Activated CD4-positive, alpha-beta T cell treated with anti-CD3 and anti-CD28 coated beads for 36 hours (primary cell): ENCODE measurements at regions of chr17 and their contacts with region 1.

Region 1: DNA sequence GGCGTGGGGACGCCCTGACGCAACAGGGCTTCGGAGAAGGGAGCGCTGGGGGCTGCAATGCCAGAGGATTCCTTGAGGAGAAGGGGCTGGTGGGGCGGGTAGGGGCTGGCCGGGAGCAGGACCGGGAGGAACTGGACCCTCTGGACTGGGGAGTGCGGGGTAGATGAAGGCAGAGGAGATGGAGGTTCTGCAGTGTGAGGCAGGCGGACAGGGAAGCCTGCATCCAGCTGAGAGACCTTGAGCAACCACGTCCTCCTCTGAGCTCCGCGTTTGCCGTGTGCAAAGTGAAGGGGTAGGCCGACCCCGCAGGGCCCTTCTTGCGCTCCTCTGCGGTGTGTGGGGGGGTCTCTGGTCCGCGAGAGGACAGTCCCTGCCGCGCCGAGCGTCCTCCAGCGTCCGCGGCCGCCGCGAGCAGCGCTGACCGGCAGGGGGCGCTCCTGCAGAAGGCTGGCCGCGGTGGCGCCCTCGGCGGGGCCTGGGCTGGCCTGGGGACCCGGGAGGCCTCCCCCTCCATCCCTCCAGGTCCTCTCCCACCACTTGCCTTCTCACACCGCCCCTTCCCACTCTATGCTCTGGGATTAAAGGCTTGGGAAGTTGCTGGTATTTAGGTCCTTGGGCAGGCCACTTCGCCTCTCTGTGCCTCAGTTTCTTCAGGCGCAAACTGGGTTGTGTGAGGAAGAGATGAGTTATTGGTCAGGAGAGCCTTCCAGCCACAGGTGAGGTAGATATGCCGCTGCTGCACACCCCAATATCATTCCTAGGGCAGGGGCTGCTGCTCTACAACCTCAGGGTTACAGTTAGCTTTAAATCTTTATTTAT is 9.6 kb upstream of the WNT9B start:
- DNase-seq: peak; percentile 56
- ATAC-seq: peak; percentile 51
- H3K4me3 Mint-ChIP-seq: no peak overlapping the region
- H3K27ac Mint-ChIP-seq: no peak overlapping the region
- H3K4me1 Mint-ChIP-seq: no peaks in the 10 kb centered on the region
- H3K27me3 Mint-ChIP-seq: peaks cover 37% of the 10 kb centered on the region

Region 2: DNA sequence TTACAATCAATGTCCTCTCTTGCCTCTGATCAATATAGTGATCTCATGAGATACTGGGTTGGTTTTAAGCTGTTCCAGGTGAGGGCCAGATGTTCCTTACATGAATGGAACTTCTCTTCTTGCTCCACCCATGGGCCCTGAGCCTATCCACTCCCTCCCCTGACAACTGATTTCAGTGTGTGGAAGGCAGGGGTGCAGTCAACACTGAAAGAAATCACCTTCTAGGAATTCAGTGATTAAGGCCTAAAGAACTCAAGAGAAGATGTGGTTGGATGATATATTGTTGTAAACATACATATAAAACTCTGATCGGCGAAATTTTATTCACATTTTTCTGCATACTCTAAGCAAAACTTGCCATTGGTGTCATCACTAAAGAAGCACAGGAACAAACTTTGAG is 74.4 kb after region 1 on chr17:
- CTCF ChIA-PET with region 1: no interaction called
- POLR2A ChIA-PET with region 1: no interaction called
- intact Hi-C with region 1: no loop called
- DNase-seq: no peak
- ATAC-seq: no peak
- H3K4me3 Mint-ChIP-seq: no peak overlapping the region
- H3K27ac Mint-ChIP-seq: no peak overlapping the region
- H3K4me1 Mint-ChIP-seq: no peaks in the 10 kb centered on the region
- H3K27me3 Mint-ChIP-seq: peaks cover 4% of the 10 kb centered on the region

Region 3: DNA sequence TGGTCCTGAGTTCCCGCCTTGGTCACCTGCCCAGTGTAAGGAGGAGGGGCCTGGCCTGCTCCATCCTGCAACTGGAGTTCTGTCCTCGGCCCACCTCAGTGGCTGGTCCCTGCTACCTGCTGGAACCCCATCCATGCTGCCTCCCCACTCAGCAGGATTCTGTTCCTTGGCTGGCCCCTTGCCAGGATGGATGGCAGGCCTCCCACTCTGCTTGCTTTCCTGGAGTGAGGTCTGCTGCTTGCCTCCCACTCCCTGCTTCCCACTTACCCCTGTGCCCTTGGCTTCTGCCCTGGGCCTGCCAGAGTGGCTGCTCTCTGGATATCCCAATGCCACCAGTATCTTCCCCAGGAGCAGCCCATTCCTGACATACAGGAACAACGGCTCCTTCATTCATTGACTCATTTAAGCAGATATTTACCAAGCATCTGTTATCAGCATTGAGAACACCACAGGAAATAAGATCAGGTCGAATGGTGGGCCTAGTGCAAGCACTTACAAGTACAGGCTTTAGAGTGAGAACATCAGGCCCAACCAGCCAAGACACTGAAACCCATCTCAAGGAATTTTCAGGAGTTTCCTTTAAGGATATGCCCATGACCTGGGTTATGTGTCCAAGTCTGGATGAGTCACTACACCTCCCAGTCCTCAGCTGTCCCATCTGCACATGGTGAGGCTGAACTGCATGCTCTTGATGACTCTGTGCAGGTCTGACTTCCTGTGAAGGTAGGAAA is 154.2 kb after region 1 on chr17:
- CTCF ChIA-PET with region 1: interaction called, 5 read pairs
- POLR2A ChIA-PET with region 1: no interaction called
- intact Hi-C with region 1: loop called (anchors 1 to 5 kb)
- DNase-seq: no peak
- ATAC-seq: no peak
- H3K4me3 Mint-ChIP-seq: no peak overlapping the region
- H3K27ac Mint-ChIP-seq: no peak overlapping the region
- H3K4me1 Mint-ChIP-seq: no peaks in the 10 kb centered on the region
- H3K27me3 Mint-ChIP-seq: no peaks in the 10 kb centered on the region

Region 4: GRCh38 chr17:47004906-47005305 is 163.1 kb after region 1 on chr17:
- CTCF ChIA-PET with region 1: interaction called, 5 read pairs
- POLR2A ChIA-PET with region 1: no interaction called
- intact Hi-C with region 1: loop called (anchors 1 to 5 kb)
- DNase-seq: no peak
- ATAC-seq: no peak
- H3K4me3 Mint-ChIP-seq: no peak overlapping the region
- H3K27ac Mint-ChIP-seq: no peak overlapping the region
- H3K4me1 Mint-ChIP-seq: peaks cover 2% of the 10 kb centered on the region
- H3K27me3 Mint-ChIP-seq: no peaks in the 10 kb centered on the region